Dendritic cell treated with granulocyte-macrophage colony-stimulating factor and Interleukin-4, amounts not matched to agents 40 ng/mL and 50 ng/mL, for 4 days (primary cell): ENCODE measurements at regions of chr17 and their contacts with region 1.

Region 1: DNA sequence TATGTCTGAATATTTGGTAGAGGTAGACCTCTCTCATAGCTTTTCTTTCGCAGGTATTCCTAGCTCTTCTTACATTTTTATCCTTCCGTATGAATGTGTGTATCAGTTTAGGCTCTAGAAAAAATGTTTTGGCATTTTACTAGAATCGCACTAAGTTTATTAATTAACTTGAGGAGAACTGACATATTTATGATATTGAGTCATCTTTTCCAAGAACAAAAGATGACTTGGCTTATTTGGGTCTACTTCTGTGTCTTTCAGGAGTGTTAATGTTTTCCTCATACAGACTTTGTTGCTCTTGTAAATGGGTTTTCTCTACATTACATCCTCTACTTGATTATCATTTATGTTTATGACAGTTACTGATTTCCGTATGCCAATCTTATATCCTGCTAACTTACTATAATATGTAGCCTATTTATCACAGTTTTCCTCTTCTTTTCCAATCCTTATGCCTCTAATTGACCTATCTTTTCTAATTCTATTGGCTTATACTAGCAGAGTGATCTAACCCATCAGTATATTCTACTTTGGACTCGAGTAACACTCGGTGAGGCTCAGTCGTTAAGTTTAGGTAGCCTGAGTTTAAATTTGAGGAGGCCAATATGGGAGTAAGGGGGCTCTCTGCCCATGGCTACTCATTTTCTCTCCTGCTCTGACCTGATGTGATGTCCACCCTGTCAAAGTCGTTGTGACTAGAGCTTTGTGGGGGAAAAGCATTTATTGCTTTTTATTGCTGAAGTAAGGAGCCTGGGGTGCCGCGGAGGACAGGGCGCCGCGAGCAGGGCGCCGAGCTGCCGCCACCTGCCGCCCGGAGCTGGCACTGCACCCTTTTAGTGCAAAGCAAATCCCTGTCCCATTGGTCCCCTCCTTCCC is 20.0 kb downstream of the ST6GALNAC1 start:
- H3K4me3 Mint-ChIP-seq: no peak overlapping the region
- H3K27ac Mint-ChIP-seq: no peak overlapping the region
- H3K4me1 Mint-ChIP-seq: peaks cover 12% of the 10 kb centered on the region
- H3K27me3 Mint-ChIP-seq: peaks cover 23% of the 10 kb centered on the region

Region 2: GRCh38 chr17:76547184-76547641 is 76.3 kb before region 1 on chr17:
- intact Hi-C with region 1: no loop called
- H3K4me3 Mint-ChIP-seq: no peak overlapping the region
- H3K27ac Mint-ChIP-seq: no peak overlapping the region
- H3K4me1 Mint-ChIP-seq: peaks cover 20% of the 10 kb centered on the region
- H3K27me3 Mint-ChIP-seq: peaks cover 39% of the 10 kb centered on the region

Region 3: GRCh38 chr17:76557368-76558197 is 65.9 kb before region 1 on chr17:
- intact Hi-C with region 1: loop called (anchors 1 kb)
- H3K4me3 Mint-ChIP-seq: peak overlapping the region; percentile 96
- H3K27ac Mint-ChIP-seq: peak overlapping the region; percentile 99
- H3K4me1 Mint-ChIP-seq: peaks cover 51% of the 10 kb centered on the region
- H3K27me3 Mint-ChIP-seq: no peaks in the 10 kb centered on the region

Region 4: DNA sequence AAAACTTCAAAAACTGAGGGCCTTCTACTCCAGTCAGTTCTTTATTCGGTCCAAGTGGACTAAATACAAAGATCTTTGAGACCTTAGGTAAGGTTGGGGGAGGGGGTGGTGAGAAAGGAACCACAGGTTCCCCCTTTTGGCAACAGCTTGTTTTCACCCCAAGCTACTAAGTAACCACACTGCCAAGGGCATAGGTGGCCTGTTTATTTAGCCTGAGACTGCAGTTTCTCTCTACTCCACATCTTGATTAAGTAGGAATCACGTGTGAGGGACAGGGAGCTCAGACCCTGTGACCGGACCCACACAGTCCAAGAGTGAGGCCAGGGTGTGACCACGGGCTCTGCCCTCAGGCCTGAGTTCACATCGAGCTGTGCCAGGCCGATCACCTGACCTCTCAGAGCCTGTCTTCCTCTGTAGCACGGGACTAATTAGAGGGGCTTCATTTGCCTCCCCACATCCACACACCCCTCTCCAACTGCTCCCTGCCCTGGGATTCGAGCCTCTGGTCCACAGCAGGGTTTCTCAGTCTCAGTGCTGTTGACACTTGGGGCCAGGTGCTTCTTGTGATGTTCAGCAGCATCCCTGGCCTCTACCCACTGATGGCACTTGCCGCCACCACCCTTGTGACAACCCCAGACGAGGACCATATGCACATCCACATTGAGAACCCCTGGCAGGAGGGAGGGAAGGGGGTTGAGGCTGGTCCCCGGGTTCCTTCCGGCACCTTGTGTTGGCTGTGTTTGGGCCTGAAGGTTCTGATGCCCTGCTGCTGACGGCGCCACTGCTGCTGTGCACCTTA is 55.7 kb before region 1 on chr17:
- intact Hi-C with region 1: no loop called
- H3K4me3 Mint-ChIP-seq: no peak overlapping the region
- H3K27ac Mint-ChIP-seq: no peak overlapping the region
- H3K4me1 Mint-ChIP-seq: peaks cover 50% of the 10 kb centered on the region
- H3K27me3 Mint-ChIP-seq: peaks cover 19% of the 10 kb centered on the region

Region 5: DNA sequence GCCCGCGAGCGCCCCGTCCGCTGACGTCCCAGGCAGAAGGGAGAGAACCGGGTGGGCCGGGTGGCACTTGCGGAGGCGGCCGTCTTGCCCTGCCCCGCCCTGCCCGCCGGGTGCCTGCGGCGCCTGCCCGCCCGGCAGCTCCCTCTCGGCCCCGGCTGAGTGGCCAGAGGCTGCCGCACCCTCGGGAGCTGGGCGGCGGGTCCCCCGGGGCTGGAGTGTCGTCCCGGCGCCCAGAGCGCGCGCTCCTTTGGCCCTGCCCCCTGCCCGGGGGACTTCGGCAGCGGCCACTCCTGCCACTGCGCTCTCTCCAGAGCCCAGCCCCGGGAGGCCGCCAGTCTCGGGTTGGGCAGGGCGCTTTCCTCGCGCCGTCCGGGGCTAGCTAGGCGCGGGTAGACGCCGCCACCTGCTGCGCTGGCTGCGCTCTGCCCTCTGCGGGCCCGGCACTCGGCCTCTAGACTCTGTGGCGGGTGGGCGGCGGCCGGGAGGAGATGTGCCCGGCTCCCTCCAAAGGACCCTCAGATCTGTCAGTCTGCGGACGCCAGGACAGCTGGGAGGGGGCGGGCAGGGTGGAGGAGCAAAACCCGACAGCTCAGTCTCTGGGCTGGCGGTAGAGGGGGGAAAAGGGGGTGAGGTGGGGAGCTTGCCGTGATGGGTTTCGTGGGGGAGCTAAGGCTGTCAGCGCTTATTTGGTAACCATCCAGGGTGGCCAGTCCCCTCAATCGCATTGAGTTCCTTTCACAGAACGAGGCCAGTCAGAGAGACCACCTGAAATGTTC is 37.5 kb before region 1 on chr17 and contains the start of gene ST6GALNAC2:
- intact Hi-C with region 1: loop called (anchors 5 kb)
- H3K4me3 Mint-ChIP-seq: peak within 1 kb of the TSS; percentile 88
- H3K27ac Mint-ChIP-seq: peak within 1 kb of the TSS; percentile 77
- H3K4me1 Mint-ChIP-seq: peaks cover 28% of the 10 kb centered on the region
- H3K27me3 Mint-ChIP-seq: peaks cover 63% of the 10 kb centered on the region